K562 (cell line): ENCODE measurements at regions of chr11 and their contacts with region 1.

Region 1: DNA sequence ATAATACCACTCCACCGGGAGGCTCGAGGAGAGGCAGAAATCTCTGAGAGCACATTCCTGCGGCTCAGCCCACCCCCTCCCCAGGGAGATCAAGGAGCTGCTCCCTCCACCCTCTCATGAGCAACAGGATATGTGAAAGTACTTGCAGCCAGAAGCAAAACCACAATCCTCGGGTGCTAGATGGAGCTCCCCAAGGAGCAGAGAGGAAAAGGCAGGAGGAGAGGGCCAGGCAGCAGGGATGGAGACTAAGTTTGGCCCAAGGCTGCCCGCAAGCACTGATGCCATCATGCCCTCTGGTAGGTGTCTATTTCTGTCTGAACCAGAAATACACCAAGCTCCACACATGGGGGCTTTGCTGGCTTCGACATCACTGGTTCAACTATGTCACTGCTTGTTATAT is 22.3 kb downstream of the VPS37C start:
- DNase-seq: no peak
- ATAC-seq: no peak
- H3K4me3 ChIP-seq: no peak overlapping the region
- H3K27ac ChIP-seq: no peak overlapping the region
- H3K4me1 ChIP-seq: peaks cover 0 to 8% of the 10 kb centered on the region in 2 experiments; a peak in 3 of 5 replicates
- H3K27me3 ChIP-seq: no peaks in the 10 kb centered on the region
- CTCF ChIP-seq: no peak
- EP300 ChIP-seq: no peak
- POLR2A ChIP-seq: no peak
- RAD21 ChIP-seq: no peak

Region 2: DNA sequence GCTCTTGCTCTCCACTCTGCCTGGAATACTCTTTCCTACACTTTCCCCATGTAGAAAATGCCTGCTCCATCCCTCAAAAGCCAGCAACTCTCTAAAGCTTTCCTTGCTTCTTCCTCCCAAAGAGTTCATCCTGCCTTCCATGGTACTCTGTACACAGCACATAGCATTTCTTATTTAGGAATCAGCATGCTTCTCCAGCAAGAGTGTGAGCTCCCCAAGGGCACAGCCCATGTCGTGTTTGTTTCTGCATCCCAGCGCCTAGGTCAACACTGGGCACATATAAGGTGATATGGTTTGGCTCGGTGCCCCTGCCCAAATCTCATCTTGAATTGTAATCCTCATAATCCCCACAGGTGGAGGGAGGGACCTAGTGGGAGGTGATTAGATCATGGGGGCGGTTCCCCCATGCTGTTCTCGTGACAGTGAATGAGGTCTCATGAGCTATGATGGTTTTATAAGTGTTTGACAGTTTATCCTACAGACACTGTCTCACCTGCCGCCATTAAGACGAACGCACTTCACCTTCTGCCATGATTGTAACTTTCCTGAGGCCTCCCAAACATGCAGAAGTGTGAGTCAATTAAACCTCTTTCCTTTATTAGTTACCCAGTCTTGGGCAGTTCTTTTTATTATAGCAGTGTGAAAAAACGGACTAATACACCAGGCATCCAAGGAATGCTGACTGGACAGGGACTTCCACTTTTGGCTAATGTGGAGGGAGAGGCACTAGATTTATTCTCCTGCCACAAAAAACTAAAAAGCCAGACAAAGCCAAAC is 14.1 kb after region 1 on chr11:
- CTCF ChIA-PET with region 1: no interaction called
- POLR2A ChIA-PET with region 1: interaction called, 13 read pairs
- in situ Hi-C with region 1: no loop called
- intact Hi-C with region 1: no loop called
- DNase-seq: peak in 1 of 4 experiments; percentile 40
- ATAC-seq: peak; percentile 21
- H3K4me3 ChIP-seq: no peak overlapping the region
- H3K27ac ChIP-seq: peak overlapping the region; percentile 58; the same call in 1 of the 3 replicates
- H3K4me1 ChIP-seq: peaks cover 40 to 48% of the 10 kb centered on the region in 2 experiments
- H3K27me3 ChIP-seq: no peaks in the 10 kb centered on the region
- CTCF ChIP-seq: no peak
- EP300 ChIP-seq: no peak
- POLR2A ChIP-seq: no peak
- RAD21 ChIP-seq: no peak

Region 3: DNA sequence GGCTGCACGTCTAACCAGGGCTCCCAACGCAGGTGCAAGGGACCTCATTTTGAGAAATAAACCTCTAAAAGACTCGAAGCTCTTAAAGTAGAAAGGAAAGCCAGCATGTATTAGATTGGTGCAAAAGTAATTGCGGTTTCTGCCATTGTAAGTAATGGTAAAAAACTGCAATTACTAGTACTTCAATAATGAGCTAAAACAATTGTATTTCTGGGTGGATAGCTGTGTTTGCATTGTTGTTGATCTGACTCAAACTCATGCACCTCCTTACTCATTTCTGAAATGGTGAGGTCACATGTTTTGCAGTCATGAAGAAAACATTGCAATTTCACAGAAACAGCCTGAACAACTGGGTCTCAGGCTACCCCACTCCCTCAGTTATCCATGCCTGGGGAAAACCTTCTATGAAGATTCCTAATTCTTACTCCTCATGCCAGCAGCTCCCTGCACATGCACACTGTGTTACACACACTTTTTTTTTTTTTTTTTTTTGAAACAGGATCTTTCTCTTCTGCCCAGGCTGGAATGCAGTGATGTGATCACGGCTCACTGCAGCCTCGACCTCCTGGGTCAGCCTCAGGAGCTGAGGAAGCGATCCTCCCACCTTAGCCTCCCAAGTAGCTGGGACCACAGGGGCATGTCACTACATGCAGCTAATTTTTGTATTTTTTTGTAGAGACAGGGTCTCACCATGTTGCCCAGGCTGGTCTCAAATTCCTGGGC is 131.6 kb after region 1 on chr11:
- CTCF ChIA-PET with region 1: no interaction called
- POLR2A ChIA-PET with region 1: no interaction called
- in situ Hi-C with region 1: no loop called
- intact Hi-C with region 1: no loop called
- DNase-seq: no peak
- ATAC-seq: no peak
- H3K4me3 ChIP-seq: no peak overlapping the region
- H3K27ac ChIP-seq: no peak overlapping the region
- H3K4me1 ChIP-seq: peaks cover 15 to 30% of the 10 kb centered on the region in 2 experiments; a peak in 4 of 5 replicates
- H3K27me3 ChIP-seq: no peaks in the 10 kb centered on the region
- CTCF ChIP-seq: no peak
- EP300 ChIP-seq: no peak
- POLR2A ChIP-seq: no peak
- RAD21 ChIP-seq: no peak